IMR-90 (cell line): ENCODE measurements at regions of chr16 and their contacts with region 1.

Region 1: DNA sequence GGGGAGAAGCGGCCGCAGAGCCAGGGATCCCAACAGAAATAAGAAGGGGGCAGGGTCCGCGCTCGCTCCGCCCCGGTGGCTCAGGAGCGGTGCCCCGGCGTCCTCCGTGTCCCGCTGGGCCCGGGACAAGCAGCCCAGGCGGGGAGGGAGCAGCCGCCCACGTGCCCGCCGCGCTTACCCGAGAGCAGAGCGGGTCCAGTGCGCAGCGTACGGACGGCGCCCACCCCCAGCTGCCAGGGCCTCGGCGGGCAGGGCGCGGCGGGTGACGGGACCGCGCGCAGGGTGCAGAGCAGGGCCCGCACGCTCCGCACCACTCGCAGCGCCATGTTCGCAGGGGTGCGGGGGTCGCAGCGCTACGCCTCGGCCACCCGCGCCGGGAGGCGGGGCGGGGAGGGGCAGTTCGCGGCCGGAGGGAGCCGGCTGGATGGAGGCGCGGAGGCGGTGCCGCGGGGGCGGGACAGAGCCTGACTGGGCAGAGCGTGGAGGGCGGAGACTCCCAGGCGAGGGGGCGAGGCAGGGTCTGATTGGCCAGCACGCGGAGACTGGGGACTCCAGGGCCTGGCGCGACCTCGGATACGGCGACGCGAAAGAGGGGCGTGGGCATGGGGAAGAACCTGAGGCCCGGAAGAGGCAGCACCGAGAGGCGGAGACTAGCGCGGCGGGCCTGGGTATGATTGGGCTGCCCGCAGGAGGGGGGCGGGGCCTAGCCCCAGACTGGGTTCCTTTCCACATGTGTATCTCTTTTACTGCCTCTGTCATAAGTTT is at the start of gene GCSH:
- DNase-seq: peak; percentile 98
- ATAC-seq: peak; percentile 99
- H3K4me3 ChIP-seq: peak within 1 kb of the TSS; percentile 73
- H3K27ac ChIP-seq: peak within 1 kb of the TSS; percentile 42; the same call in 1 of the 2 replicates
- H3K4me1 ChIP-seq: 0 out of 2 replicates have a peak, but pooled peaks cover 2% of the 10 kb centered on the region
- H3K27me3 ChIP-seq: no peaks in the 10 kb centered on the region
- CTCF ChIP-seq: no peak
- POLR2A ChIP-seq: no peak
- RAD21 ChIP-seq: no peak
- total RNA-seq, gene GCSH: 9.3 and 19.7 TPM in 2 replicates

Region 2: GRCh38 chr16:80174418-80174817 is 921.7 kb before region 1 on chr16:
- CTCF ChIA-PET with region 1: no interaction called
- POLR2A ChIA-PET with region 1: no interaction called
- dilution Hi-C with region 1: no loop called
- in situ Hi-C with region 1: no loop called
- intact Hi-C with region 1: loop called (anchors 10 kb)
- DNase-seq: peak; percentile 89
- ATAC-seq: peak; percentile 79
- H3K4me3 ChIP-seq: no peak overlapping the region
- H3K27ac ChIP-seq: peak overlapping the region; percentile 86
- H3K4me1 ChIP-seq: peaks cover 12% of the 10 kb centered on the region; the same call in 1 of the 2 replicates
- H3K27me3 ChIP-seq: no peaks in the 10 kb centered on the region
- CTCF ChIP-seq: no peak
- POLR2A ChIP-seq: no peak
- RAD21 ChIP-seq: no peak

Region 3: GRCh38 chr16:80346111-80346632 is 750.0 kb before region 1 on chr16:
- CTCF ChIA-PET with region 1: no interaction called
- POLR2A ChIA-PET with region 1: no interaction called
- dilution Hi-C with region 1: no loop called
- in situ Hi-C with region 1: no loop called
- intact Hi-C with region 1: no loop called
- DNase-seq: no peak
- ATAC-seq: no peak
- H3K4me3 ChIP-seq: no peak overlapping the region
- H3K27ac ChIP-seq: no peak overlapping the region
- H3K4me1 ChIP-seq: no peaks in the 10 kb centered on the region
- H3K27me3 ChIP-seq: no peaks in the 10 kb centered on the region; the same call in 1 of the 2 replicates
- CTCF ChIP-seq: no peak
- POLR2A ChIP-seq: no peak
- RAD21 ChIP-seq: no peak

Region 4: GRCh38 chr16:81121474-81121995 is 25.4 kb after region 1 on chr16:
- CTCF ChIA-PET with region 1: no interaction called
- POLR2A ChIA-PET with region 1: no interaction called
- dilution Hi-C with region 1: no loop called
- in situ Hi-C with region 1: no loop called
- intact Hi-C with region 1: no loop called
- DNase-seq: no peak
- ATAC-seq: no peak
- H3K4me3 ChIP-seq: no peak overlapping the region
- H3K27ac ChIP-seq: no peak overlapping the region
- H3K4me1 ChIP-seq: no peaks in the 10 kb centered on the region
- H3K27me3 ChIP-seq: peaks cover 2% of the 10 kb centered on the region
- CTCF ChIP-seq: no peak
- POLR2A ChIP-seq: no peak
- RAD21 ChIP-seq: no peak

Region 5: DNA sequence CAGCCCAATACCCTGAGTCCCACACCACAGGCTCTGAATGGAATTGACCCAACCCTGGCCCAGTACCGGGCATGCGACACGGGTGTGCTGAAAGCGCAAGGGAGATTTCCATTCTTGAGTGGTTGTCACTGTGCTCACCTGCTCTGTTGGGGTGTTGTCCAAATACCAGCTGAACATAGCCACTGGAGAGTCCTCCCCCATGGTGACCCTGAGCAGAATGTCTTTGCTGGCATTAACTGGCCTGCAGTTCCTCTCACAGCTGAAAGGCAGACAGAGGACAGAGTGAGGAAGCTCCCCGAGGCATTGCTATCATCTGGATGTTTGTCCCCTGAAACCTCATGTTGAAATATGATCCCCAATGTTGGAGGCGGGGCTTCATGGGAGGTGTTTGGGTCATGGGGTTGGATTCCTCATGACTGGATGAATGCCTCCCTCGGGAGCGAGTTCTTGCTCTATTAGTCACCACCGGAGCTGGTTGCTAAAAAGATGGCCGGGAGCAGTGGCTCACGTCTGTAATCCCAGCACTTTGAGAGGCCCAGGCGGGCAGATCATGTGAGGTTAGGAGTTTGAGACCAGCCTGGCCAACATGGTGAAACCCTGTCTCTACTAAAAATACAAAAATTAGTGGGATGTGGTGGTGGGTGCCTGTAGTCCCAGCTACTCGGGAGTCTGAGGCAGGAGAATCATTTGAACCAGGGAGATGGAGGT is 85.0 kb after region 1 on chr16:
- CTCF ChIA-PET with region 1: no interaction called
- POLR2A ChIA-PET with region 1: no interaction called
- dilution Hi-C with region 1: no loop called
- in situ Hi-C with region 1: no loop called
- intact Hi-C with region 1: loop called (anchors 2 kb)
- DNase-seq: peak; percentile 97
- ATAC-seq: peak; percentile 95
- H3K4me3 ChIP-seq: no peak overlapping the region
- H3K27ac ChIP-seq: peak overlapping the region; percentile 72; the same call in 1 of the 2 replicates
- H3K4me1 ChIP-seq: peaks cover 6% of the 10 kb centered on the region
- H3K27me3 ChIP-seq: no peaks in the 10 kb centered on the region
- CTCF ChIP-seq: 0 out of 2 replicates have a peak, but pooled peaks have one; percentile 2
- POLR2A ChIP-seq: no peak
- RAD21 ChIP-seq: no peak